ENCODE measurements at regions of chr12 and their contacts with region 1.

Region 1: GRCh38 chr12:62799126-62799736 is 135.7 kb downstream of the PPM1H start:
- DNase-seq: peak in 1 of 2 donors; percentile 80
- H3K4me3 ChIP-seq: no peak overlapping the region
- H3K27ac ChIP-seq: no peak overlapping the region
- H3K4me1 ChIP-seq: no peaks in the 10 kb centered on the region
- H3K27me3 ChIP-seq: no peaks in the 10 kb centered on the region
- CTCF ChIP-seq: peak; percentile 74 to 95 (median 93)

Region 2: DNA sequence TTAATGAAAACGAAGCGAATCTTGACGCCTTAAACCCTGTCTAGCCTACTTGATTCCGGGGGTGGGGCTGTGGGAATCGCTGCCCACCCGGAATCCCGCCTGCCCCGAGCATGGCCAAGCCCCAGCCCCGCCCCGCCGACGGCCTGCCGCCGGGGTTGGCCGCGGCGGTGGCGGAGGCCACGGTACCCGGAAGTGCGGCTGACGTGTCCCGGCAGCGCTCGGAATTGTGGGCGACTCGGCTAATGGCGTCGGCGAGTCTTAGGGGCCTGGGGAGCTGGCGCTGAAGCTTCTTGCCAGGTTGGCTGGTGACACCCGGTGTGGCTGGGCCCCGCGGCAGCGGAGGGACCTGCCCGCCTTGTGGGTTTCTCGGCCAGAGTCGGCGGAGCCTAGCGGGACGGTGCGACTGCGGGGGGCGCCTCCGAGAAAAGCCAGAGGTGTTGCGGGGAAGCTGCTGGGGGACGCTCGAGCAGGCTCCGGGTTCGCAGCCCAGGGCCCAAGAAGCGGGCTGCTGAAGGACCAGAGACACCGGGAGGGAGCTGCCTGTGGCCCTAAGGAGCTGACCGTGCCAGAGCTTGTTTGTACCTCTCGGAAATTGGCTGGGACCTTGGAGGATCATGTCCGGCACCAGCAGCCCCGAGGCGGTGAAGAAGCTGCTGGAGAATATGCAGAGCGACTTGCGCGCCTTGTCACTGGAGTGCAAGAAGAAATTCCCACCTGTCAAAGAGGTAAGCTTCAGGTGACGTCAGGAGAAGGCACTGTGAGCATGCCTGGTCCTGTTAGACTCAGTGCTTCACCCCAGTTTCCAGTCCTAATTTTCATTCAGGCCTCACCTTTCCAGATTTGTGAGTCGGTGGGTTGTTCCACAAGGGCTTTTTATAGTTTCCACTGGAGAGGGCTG is 332.4 kb before region 1 on chr12 and contains the start of gene MON2:
- intact Hi-C with region 1: loop called (anchors 10 kb)
- DNase-seq: peak; percentile 44 to 94
- H3K4me3 ChIP-seq: peak within 1 kb of the TSS; percentile 92 to 95
- H3K27ac ChIP-seq: peak within 1 kb of the TSS; percentile 92 to 95
- H3K4me1 ChIP-seq: peaks cover 0 to 18% of the 10 kb centered on the region in 2 donors
- H3K27me3 ChIP-seq: no peaks in the 10 kb centered on the region
- CTCF ChIP-seq: no peak
- total RNA-seq, gene MON2: 14.4 TPM

Region 3: GRCh38 chr12:62522984-62523383 is 276.2 kb before region 1 on chr12:
- intact Hi-C with region 1: loop called (anchors 5 kb)
- DNase-seq: no peak
- H3K4me3 ChIP-seq: no peak overlapping the region
- H3K27ac ChIP-seq: no peak overlapping the region
- H3K4me1 ChIP-seq: no peaks in the 10 kb centered on the region
- H3K27me3 ChIP-seq: no peaks in the 10 kb centered on the region
- CTCF ChIP-seq: no peak

Region 4: DNA sequence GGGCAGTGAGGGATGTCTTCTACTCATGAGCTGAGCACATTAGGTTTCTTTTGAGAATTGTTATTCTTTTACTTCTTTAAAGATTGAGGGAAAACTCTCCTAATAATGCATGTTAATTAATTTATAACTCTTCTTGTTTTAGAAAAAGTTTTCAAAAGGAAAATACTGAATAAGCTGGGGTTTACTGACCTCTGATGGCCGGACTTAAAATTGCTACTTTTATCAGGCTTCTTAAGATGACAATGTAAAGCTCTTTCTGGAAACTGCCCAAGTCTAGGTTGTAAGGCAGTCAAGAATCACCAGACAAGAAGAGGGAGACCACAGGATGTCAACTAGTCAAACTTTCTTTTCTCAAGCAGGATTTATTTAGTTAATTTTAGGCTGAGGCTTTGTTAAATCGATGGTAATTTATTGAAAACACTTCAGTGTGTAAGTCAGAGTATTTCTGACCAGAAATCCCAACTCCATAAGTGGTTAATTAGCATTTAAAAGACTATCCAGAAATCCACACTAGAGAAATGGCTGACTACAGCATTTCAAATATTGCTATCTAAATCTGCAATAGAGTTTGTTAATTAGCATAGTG is 269.7 kb after region 1 on chr12:
- intact Hi-C with region 1: loop called (anchors 2 kb)
- DNase-seq: no peak
- H3K4me3 ChIP-seq: no peak overlapping the region
- H3K27ac ChIP-seq: no peak overlapping the region
- H3K4me1 ChIP-seq: no peaks in the 10 kb centered on the region
- H3K27me3 ChIP-seq: no peaks in the 10 kb centered on the region
- CTCF ChIP-seq: peak; percentile 5 to 65 (median 57)

Measured in ascending aorta (tissue), 2 donors.